Sigmoid colon (tissue), 7 donors: ENCODE measurements at regions of chr19 and their contacts with region 1.

Region 1: DNA sequence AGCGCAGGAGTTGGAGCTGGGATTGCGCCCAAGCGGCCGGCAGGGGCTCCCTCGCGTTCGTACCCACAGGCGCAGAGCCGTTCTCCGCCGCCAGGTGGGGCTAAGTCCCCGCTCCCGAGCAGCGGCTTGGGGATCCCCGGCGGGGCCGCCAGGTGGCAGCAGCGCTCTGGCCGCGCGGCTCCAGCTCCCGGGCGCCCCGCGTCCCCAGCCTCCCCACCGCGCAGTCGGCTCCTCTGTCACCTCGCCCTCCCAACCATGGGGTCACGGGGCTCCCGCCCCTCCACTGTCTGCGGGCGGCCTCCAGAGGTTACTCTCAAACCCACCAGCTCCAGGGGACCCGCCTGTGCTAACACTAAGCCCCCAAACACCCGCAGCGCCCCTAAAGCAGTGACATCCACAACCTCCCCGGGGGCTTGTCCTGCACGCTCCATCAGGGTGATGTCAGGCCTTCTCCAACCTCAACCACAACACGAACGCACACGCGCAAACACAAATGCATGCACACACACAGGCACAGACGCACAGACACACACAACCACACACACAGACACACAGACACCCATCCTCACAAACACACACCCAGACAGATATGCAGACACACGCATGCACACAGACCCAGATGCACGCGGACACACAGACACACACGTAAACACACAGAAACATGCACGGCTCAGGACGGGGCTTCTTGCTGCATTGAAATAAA is 18.4 kb upstream of the KCTD15 start:
- DNase-seq: peak; percentile 88
- H3K4me3 ChIP-seq: peak overlapping the region in 1 of 4 donors; percentile 27
- H3K27ac ChIP-seq: no peak overlapping the region
- H3K4me1 ChIP-seq: peaks cover 0 to 5% (median 5%) of the 10 kb centered on the region in 4 donors
- H3K27me3 ChIP-seq: peaks cover 0 to 43% (median 15%) of the 10 kb centered on the region in 3 donors
- CTCF ChIP-seq: peak; percentile 99 to 100 (median 100)
- EP300 ChIP-seq: no peak
- POLR2A ChIP-seq: no peak

Region 2: DNA sequence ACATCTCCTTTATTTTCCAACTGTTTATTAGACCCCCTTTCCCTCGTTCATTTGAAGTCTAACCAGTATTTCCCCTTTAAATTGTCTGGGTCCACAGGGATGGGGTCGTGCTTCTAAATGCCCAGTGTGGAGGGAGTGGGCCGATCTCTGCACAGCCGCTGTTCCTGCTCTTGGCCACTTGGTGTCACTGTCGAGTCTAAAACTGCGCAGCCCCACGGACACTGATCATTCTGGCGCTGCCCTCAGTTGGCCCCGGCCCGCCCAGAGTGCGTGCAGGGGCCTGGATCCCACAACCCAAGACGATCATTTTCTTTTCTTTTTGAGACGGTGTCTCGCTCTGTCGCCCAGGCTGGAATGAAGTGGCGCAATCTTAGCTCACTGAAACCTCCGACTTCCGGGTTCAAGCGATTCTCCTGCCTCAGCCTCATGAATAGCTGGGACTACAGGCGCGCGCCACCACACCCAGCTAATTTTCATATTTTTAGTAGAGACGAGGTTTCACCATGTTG is 634.3 kb before region 1 on chr19:
- intact Hi-C with region 1: loop called (anchors 10 kb)
- DNase-seq: peak; percentile 84
- H3K4me3 ChIP-seq: no peak overlapping the region
- H3K27ac ChIP-seq: no peak overlapping the region
- H3K4me1 ChIP-seq: peaks cover 0 to 4% (median 0%) of the 10 kb centered on the region in 4 donors
- H3K27me3 ChIP-seq: peaks cover 0 to 9% (median 0%) of the 10 kb centered on the region in 3 donors
- CTCF ChIP-seq: peak; percentile 89 to 95 (median 94)
- EP300 ChIP-seq: no peak
- POLR2A ChIP-seq: no peak

Region 3: DNA sequence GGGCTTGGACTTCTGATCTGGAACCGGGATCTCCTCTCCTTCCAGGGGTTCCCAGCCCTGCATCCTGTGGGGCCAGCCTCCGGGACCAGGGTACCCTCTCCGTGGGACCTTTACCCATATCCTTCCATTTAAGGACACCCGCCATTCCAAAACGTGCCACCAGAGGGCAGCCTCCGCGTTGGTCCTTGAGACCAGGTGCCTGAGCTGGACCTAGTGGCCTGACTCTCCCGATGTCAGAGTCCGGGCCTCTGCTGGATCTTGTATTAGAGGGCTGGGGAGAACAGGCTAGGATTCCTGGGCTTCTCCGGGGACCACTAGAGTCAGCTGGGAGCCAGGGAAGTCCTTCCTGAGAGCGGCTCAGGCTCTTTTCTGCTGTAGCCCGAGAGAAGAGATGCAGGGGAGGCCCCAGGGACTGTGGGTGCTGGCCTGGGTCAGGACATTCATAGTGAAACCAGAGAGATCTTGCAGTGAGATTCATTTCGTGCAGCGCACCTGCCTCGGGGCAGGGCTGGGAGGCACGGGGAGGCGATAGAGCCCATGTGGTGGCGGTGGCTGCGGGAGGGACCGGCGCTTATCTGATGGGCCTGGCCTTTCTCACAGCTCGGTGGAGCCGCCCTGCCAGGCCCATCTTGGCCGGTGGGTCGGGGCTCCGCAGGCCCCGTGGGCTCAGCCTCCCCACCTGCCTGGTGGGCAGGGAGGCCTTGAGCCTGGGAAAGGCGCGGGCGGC is 542.8 kb before region 1 on chr19:
- intact Hi-C with region 1: loop called (anchors 10 kb)
- DNase-seq: peak; percentile 85
- H3K4me3 ChIP-seq: no peak overlapping the region
- H3K27ac ChIP-seq: no peak overlapping the region
- H3K4me1 ChIP-seq: no peaks in the 10 kb centered on the region
- H3K27me3 ChIP-seq: peaks cover 0 to 23% (median 12%) of the 10 kb centered on the region in 3 donors
- CTCF ChIP-seq: peak; percentile 76 to 90 (median 84)
- EP300 ChIP-seq: no peak
- POLR2A ChIP-seq: no peak

Region 4: GRCh38 chr19:33868788-33869412 is 90.7 kb after region 1 on chr19:
- intact Hi-C with region 1: loop called (anchors 1 kb)
- DNase-seq: peak; percentile 77
- H3K4me3 ChIP-seq: peak overlapping the region in 3 of 4 donors; percentile 28 to 43 (median 28)
- H3K27ac ChIP-seq: peak overlapping the region in 3 of 4 donors; percentile 13 to 73 (median 69)
- H3K4me1 ChIP-seq: peaks cover 0 to 21% (median 21%) of the 10 kb centered on the region in 4 donors
- H3K27me3 ChIP-seq: no peaks in the 10 kb centered on the region
- CTCF ChIP-seq: no peak
- EP300 ChIP-seq: no peak
- POLR2A ChIP-seq: no peak

Region 5: GRCh38 chr19:33998739-33999345 is 220.6 kb after region 1 on chr19:
- intact Hi-C with region 1: loop called (anchors 5 kb)
- DNase-seq: no peak
- H3K4me3 ChIP-seq: no peak overlapping the region
- H3K27ac ChIP-seq: no peak overlapping the region
- H3K4me1 ChIP-seq: no peaks in the 10 kb centered on the region
- H3K27me3 ChIP-seq: no peaks in the 10 kb centered on the region
- CTCF ChIP-seq: peak in 2 of 4 experiments; percentile 22 to 39
- EP300 ChIP-seq: no peak
- POLR2A ChIP-seq: no peak

Region 6: DNA sequence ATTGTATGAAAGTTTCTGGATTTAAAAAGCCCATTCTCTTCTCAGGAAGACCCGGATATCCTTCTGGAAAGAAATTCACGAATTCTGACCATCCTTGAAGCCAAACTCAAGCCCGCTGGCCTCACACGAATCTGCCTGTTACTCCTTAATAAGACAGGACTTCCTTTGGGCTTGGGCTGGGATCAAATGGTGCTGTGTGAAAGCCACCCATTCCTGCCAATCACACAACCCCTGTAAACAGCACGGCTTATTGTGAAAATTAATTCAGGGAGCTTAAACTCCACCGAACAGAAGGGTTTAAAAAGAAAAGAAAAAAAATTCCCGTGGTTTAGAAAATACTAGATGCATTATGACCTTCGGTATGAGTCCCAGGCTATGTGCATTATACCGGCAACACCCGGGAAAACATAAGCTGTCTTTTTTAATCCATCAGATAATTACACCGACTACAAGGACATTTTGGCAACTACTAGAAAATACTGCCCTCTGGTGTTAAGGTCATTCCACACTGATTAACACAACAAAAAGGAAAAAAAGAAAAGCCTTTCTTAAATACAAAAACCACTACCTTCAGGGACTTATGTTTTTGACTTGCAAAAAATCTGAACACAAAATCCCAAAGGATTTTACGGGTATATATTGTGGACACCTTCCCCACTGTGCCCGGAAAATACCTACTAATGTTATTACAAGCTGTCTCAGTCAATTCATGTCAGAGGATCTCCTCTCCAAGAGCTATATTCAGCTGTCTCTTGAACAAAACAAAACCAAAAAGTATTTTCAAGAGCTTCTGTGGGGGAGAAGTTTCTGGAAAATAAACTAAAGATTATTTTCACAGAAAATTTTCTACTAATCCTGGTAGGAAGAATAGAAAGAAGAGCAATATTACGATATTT is 318.0 kb after region 1 on chr19:
- intact Hi-C with region 1: loop called (anchors 1 kb)
- DNase-seq: no peak
- H3K4me3 ChIP-seq: no peak overlapping the region
- H3K27ac ChIP-seq: no peak overlapping the region
- H3K4me1 ChIP-seq: no peaks in the 10 kb centered on the region
- H3K27me3 ChIP-seq: no peaks in the 10 kb centered on the region
- CTCF ChIP-seq: peak; percentile 52 to 64 (median 57)
- EP300 ChIP-seq: no peak
- POLR2A ChIP-seq: no peak

Region 7: GRCh38 chr19:34145741-34146202 is 367.5 kb after region 1 on chr19:
- intact Hi-C with region 1: loop called (anchors 2 kb)
- DNase-seq: no peak
- H3K4me3 ChIP-seq: no peak overlapping the region
- H3K27ac ChIP-seq: no peak overlapping the region
- H3K4me1 ChIP-seq: no peaks in the 10 kb centered on the region
- H3K27me3 ChIP-seq: no peaks in the 10 kb centered on the region
- CTCF ChIP-seq: peak; percentile 65 to 85 (median 70)
- EP300 ChIP-seq: no peak
- POLR2A ChIP-seq: no peak